PC-3 (cell line): ENCODE measurements at regions of chr14 and their contacts with region 1.

Region 1: DNA sequence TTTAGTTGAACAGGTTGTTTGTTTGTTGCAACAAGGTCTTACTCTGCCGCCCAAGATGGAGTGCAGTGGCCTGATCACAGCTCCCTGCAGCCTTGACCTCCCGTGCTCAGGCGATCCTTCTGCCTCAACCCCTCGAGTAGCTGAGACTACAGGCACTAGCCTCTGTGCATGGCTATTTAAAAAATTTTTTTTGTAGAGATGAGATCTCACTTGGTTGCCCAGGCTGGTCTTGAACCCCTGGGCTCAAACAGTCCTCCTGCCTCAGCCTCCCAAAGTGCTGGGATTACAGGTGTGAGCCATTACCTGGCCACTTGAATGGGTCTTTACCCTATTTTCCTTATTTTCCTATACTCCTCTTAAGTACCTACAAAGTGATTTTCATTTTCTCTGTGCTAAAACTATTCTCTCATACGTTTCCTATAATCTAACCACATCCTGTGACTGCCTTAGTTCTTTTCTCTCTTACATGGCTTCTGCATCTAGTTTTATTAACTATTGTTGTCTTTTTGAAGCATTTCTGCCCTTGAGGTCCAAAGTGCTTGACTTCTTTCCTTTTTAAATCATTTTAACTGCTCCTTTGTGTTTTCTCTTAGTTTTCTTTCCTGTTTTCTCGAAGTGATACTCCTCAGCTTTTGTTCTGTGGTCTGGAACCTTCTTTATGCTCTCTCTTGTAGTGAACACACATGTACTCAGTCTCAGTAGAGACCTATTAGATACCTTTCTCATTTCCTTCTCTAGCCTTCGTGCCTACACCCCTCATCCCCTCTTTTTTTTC is 14.1 kb downstream of the GPX2 start:
- DNase-seq: no peak
- ATAC-seq: no peak
- H3K4me3 ChIP-seq: no peak overlapping the region
- H3K27ac ChIP-seq: no peak overlapping the region
- H3K4me1 ChIP-seq: no peaks in the 10 kb centered on the region
- H3K27me3 ChIP-seq: no peaks in the 10 kb centered on the region
- CTCF ChIP-seq: no peak

Region 2: GRCh38 chr14:64971943-64972791 is 43.7 kb after region 1 on chr14 and contains the start of gene RAB15:
- CTCF ChIA-PET with region 1: no interaction called
- POLR2A ChIA-PET with region 1: interaction called, 14 read pairs
- intact Hi-C with region 1: no loop called
- DNase-seq: peak; percentile 35
- ATAC-seq: peak; percentile 75
- H3K4me3 ChIP-seq: peak within 1 kb of the TSS; percentile 77
- H3K27ac ChIP-seq: no peak within 1 kb of the TSS
- H3K4me1 ChIP-seq: peaks cover 22% of the 10 kb centered on the region
- H3K27me3 ChIP-seq: no peaks in the 10 kb centered on the region
- CTCF ChIP-seq: no peak
- total RNA-seq, gene RAB15: 20.6 and 27.0 TPM in 2 replicates

Region 3: DNA sequence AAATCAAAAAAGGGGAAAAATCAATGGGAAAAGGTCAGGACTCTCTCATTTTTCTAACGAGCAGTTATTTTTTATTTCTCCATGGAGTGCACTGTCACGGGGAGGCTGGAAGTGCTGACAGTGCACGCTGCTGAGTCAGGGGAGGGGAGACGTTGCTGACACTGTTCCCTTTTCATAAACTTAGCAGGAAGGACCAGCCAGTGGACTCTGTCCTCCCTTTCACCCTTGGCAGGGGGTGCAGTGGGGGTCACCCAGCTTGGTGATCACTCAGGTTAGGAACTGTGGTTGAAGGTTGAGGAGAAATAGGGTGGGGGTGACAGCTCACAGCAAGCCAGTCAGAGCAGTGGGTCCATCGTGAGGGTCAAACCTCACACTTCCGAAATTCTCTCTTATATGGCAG is 418.5 kb after region 1 on chr14:
- CTCF ChIA-PET with region 1: no interaction called
- POLR2A ChIA-PET with region 1: interaction called, 16 read pairs
- intact Hi-C with region 1: no loop called
- DNase-seq: no peak
- ATAC-seq: no peak
- H3K4me3 ChIP-seq: no peak overlapping the region
- H3K27ac ChIP-seq: no peak overlapping the region
- H3K4me1 ChIP-seq: peaks cover 11% of the 10 kb centered on the region; the same call in 1 of the 2 replicates
- H3K27me3 ChIP-seq: no peaks in the 10 kb centered on the region
- CTCF ChIP-seq: no peak